PC-3 (cell line): ENCODE measurements at regions of chr14 and their contacts with region 1.

Region 1: GRCh38 chr14:33432407-33433023 is 493.8 kb downstream of the NPAS3 start:
- DNase-seq: peak; percentile 71
- ATAC-seq: peak; percentile 54
- H3K4me3 ChIP-seq: no peak overlapping the region
- H3K27ac ChIP-seq: no peak overlapping the region
- H3K4me1 ChIP-seq: peaks cover 12% of the 10 kb centered on the region
- H3K27me3 ChIP-seq: no peaks in the 10 kb centered on the region
- CTCF ChIP-seq: peak; percentile 82

Region 2: DNA sequence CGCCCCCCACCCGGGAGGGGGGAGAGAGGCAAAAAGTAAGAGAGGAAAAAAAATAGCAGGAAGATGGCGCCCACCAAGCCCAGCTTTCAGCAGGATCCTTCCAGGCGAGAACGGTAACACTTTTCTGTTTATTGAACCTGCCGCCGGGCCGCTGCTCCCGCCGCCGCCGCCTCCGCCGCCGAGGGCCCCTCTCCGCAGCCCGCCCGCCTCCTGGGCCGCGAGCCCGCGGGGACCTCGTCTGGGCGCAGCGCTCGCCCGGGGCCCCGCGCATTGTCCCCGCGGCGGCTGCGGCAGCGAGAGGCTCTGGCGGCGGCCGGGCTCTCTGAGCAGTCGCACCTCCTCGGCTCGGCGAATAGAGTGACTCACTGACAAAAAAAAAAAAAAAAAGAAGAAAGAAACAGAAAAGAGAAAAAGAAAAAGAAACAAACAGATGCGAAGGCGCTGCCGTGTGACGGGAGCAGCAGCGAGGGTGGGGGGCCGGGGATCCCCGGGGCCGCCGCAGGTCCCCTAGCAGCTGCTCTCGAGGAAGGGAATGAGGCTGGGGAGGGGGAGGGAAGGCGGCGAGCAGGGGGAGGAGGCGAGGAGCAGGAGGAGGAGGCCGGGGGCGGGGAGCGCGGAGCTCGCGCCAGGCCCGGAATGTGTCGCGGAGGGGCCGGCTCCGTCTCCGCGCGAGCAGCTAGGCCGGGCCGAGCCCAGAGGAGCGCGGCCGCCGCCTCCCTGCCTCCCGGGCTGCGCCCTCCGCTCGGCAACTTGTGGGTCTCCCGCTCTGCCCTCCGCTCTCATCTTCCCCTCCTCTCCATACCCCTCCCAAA is 493.1 kb before region 1 on chr14:
- CTCF ChIA-PET with region 1: no interaction called
- POLR2A ChIA-PET with region 1: no interaction called
- intact Hi-C with region 1: loop called (anchors 10 kb)
- DNase-seq: peak; percentile 63
- ATAC-seq: peak; percentile 61
- H3K4me3 ChIP-seq: peak overlapping the region; percentile 64
- H3K27ac ChIP-seq: no peak overlapping the region
- H3K4me1 ChIP-seq: peaks cover 14% of the 10 kb centered on the region; the same call in 1 of the 2 replicates
- H3K27me3 ChIP-seq: peaks cover 29% of the 10 kb centered on the region
- CTCF ChIP-seq: no peak

Region 3: GRCh38 chr14:33184587-33184986 is 247.9 kb before region 1 on chr14:
- CTCF ChIA-PET with region 1: no interaction called
- POLR2A ChIA-PET with region 1: no interaction called
- intact Hi-C with region 1: loop called (anchors 10 kb)
- DNase-seq: peak; percentile 53
- ATAC-seq: peak; percentile 85
- H3K4me3 ChIP-seq: no peak overlapping the region
- H3K27ac ChIP-seq: no peak overlapping the region
- H3K4me1 ChIP-seq: no peaks in the 10 kb centered on the region
- H3K27me3 ChIP-seq: peaks cover 9% of the 10 kb centered on the region
- CTCF ChIP-seq: peak; percentile 61

Region 4: DNA sequence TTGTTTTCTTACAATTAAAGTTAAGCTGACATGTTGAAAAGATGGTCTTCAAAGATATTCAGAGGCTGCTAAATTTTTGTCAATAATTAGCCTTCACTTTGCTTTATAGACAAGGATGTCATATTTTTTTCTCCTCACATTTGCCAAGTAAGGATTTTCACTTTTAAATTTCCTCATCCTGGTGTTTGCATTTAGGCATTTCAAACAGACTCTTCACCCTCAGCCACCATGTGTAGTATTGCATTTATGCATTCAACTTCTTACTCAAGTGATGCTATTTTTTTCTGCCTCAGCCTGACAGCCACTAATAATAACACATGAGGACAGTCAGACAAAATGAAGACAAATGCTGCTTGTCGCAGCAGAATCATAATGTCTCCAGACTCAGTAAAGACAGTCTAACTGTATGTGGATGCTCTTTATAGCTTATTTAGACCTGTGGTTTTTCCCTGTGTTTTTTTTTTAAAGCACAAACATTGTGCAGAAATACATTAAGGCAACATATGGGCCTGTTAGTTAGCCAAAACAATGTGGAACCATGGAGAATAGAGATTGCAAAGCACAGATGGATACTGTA is 12.4 kb before region 1 on chr14:
- CTCF ChIA-PET with region 1: no interaction called
- POLR2A ChIA-PET with region 1: no interaction called
- intact Hi-C with region 1: no loop called
- DNase-seq: no peak
- ATAC-seq: no peak
- H3K4me3 ChIP-seq: no peak overlapping the region
- H3K27ac ChIP-seq: no peak overlapping the region
- H3K4me1 ChIP-seq: no peaks in the 10 kb centered on the region
- H3K27me3 ChIP-seq: no peaks in the 10 kb centered on the region
- CTCF ChIP-seq: no peak

Region 5: GRCh38 chr14:33676135-33676566 is 243.6 kb after region 1 on chr14:
- CTCF ChIA-PET with region 1: no interaction called
- POLR2A ChIA-PET with region 1: no interaction called
- intact Hi-C with region 1: loop called (anchors 5 kb)
- DNase-seq: peak; percentile 78
- ATAC-seq: peak; percentile 58
- H3K4me3 ChIP-seq: no peak overlapping the region
- H3K27ac ChIP-seq: no peak overlapping the region
- H3K4me1 ChIP-seq: peaks cover 47% of the 10 kb centered on the region
- H3K27me3 ChIP-seq: no peaks in the 10 kb centered on the region
- CTCF ChIP-seq: peak; percentile 87

Region 6: DNA sequence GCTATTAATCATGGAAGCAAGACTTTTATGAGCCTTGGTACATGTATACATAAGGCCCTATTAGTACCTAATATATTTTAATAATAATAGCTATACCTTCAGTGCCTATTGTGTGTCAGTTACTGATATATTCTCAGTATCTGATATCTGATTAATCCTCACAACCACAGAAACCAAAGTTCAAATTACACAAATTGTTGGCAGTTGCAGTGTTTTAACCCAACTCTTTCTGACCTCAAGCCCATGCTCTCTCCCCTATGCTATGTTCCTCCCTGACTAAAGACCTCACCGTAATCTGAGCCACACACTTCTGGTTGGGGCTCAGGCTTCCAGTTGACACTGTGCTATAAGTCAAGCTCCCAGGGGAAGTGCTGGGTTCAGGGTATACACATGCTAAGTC is 815.1 kb after region 1 on chr14:
- CTCF ChIA-PET with region 1: no interaction called
- POLR2A ChIA-PET with region 1: no interaction called
- intact Hi-C with region 1: no loop called
- DNase-seq: no peak
- ATAC-seq: no peak
- H3K4me3 ChIP-seq: no peak overlapping the region
- H3K27ac ChIP-seq: no peak overlapping the region
- H3K4me1 ChIP-seq: no peaks in the 10 kb centered on the region
- H3K27me3 ChIP-seq: no peaks in the 10 kb centered on the region
- CTCF ChIP-seq: no peak